HEK293 (cell line): ENCODE measurements at regions of chr1 and their contacts with region 1.

Region 1: GRCh38 chr1:212035123-212035834 is at the starts of genes DTL and INTS7:
- H3K4me3 ChIP-seq: peak within 1 kb of the TSS; percentile 91
- H3K27ac ChIP-seq: peak within 1 kb of the TSS; percentile 68
- H3K4me1 ChIP-seq: peaks cover 3% of the 10 kb centered on the region; the same call in 1 of the 2 replicates
- CTCF ChIP-seq: peak; percentile 100

Region 2: DNA sequence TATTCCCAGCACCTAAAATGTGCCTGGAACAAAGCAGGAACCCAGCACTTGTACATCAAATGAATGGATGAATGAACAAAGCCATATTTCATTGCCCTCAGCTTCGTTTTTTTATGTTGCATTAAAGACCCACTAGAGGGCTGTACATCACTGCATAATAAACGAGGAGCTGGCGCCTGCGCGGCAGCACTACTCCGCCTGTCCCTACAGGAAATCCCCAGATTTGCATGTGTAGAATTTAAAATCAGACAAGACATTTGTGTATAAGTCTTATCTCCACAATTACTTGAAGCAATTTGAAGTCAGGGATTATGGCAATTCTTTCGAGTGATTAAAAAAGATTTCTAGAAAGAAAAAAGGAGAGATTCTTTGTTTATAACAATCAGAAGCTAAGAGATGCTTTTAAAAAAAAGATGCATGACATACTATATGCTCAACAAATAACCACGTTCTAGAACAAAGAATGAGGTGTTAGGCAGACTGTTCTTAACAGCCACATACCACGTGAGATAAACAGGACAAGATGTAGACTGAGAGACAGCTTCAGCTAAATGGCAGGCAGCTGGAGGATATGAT is 354.4 kb before region 1 on chr1:
- CTCF ChIA-PET with region 1: interaction called, 57 read pairs
- POLR2A ChIA-PET with region 1: interaction called, 12 read pairs
- H3K4me3 ChIP-seq: no peak overlapping the region
- H3K27ac ChIP-seq: no peak overlapping the region
- H3K4me1 ChIP-seq: no peaks in the 10 kb centered on the region
- CTCF ChIP-seq: peak; percentile 78

Region 3: GRCh38 chr1:212004895-212005608 is 30.2 kb before region 1 on chr1:
- CTCF ChIA-PET with region 1: interaction called, 30 read pairs
- POLR2A ChIA-PET with region 1: interaction called, 4 read pairs
- H3K4me3 ChIP-seq: no peak overlapping the region
- H3K27ac ChIP-seq: no peak overlapping the region
- H3K4me1 ChIP-seq: no peaks in the 10 kb centered on the region
- CTCF ChIP-seq: no peak

Region 4: GRCh38 chr1:212021563-212021962 is 13.7 kb before region 1 on chr1:
- CTCF ChIA-PET with region 1: interaction called, 48 read pairs
- POLR2A ChIA-PET with region 1: interaction called, 3 read pairs
- H3K4me3 ChIP-seq: no peak overlapping the region
- H3K27ac ChIP-seq: no peak overlapping the region
- H3K4me1 ChIP-seq: no peaks in the 10 kb centered on the region
- CTCF ChIP-seq: no peak

Region 5: GRCh38 chr1:212062832-212063438 is 27.7 kb after region 1 on chr1:
- CTCF ChIA-PET with region 1: interaction called, 26 read pairs
- POLR2A ChIA-PET with region 1: no interaction called
- H3K4me3 ChIP-seq: no peak overlapping the region
- H3K27ac ChIP-seq: no peak overlapping the region
- H3K4me1 ChIP-seq: no peaks in the 10 kb centered on the region
- CTCF ChIP-seq: peak; percentile 21; the same call in 1 of the 2 replicates

Region 6: DNA sequence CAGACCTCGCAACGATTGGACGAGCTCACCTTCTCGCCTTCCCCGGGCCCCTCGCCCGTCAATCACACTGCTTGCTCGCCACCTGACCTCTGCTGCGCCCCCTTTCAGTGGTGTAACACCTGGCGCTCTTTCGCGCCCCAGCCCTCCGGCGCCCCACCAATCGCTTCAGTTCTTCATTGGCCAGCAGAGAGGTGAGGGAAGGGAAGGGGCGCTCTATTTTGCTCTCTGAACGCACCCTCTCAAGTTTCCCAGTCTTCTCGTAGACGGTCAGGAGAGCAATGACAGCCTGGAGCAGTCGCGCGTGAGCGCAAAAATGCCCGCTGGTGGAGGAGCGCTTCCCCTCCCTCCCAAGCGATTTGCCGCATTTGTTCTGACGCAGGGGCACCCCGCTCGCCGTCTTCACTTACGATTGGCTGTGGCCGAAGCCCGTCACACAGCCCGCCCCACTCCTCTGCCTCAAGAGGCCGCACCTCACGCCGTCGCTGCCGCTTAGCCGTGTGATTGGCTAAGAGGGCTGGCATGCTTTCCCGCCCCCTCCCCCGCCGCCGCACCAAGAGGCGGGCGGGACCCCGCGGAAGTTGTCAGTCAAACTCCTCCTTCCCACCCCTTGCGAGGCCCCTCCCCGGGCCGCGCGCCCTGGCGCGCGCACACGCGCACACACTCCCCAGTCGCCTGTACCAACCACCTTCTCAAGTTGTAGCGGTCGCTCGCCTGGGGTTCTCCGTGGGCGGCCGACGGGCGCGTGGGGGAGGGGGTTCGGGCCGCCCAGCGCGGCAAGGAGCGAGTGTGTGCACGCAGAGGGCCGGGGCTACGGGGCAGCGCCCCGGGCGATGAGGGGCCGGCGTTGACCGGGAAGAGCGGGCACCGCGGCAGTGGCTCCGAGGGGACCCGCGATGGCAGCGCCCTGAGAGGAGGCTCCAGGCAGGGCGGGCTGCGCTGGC is 249.7 kb after region 1 on chr1 and contains the start of gene PPP2R5A:
- CTCF ChIA-PET with region 1: interaction called, 13 read pairs
- POLR2A ChIA-PET with region 1: interaction called, 8 read pairs
- H3K4me3 ChIP-seq: peak within 1 kb of the TSS; percentile 82
- H3K27ac ChIP-seq: peak within 1 kb of the TSS; percentile 82
- H3K4me1 ChIP-seq: 0 out of 2 replicates have a peak, but pooled peaks cover 3% of the 10 kb centered on the region
- CTCF ChIP-seq: peak; percentile 96